ENCODE measurements at regions of chr14 and their contacts with region 1.

Region 1: GRCh38 chr14:73058224-73058921 is at the start of gene RBM25:
- DNase-seq: peak; percentile 94 to 95
- H3K4me3 ChIP-seq: peak within 1 kb of the TSS; percentile 94 to 98 (median 96)
- H3K27ac ChIP-seq: peak within 1 kb of the TSS; percentile 94
- H3K4me1 ChIP-seq: peaks cover 0 to 6% (median 1%) of the 10 kb centered on the region in 4 experiments; a peak in 3 of 7 replicates
- H3K27me3 ChIP-seq: no peaks in the 10 kb centered on the region
- CTCF ChIP-seq: no peak
- EP300 ChIP-seq: no peak
- POLR2A ChIP-seq: peak; percentile 98 to 100
- RAD21 ChIP-seq: no peak
- total RNA-seq, gene RBM25: 125 and 134 TPM in 2 replicates

Region 2: GRCh38 chr14:73026845-73027542 is 31.4 kb before region 1 on chr14 and contains the start of gene ZFYVE1:
- CTCF ChIA-PET with region 1: interaction called, 4 read pairs
- POLR2A ChIA-PET with region 1: interaction called, 34 read pairs
- DNase-seq: peak; percentile 89 to 98
- H3K4me3 ChIP-seq: peak within 1 kb of the TSS; percentile 51 to 87 (median 74)
- H3K27ac ChIP-seq: peak within 1 kb of the TSS; percentile 20; the same call in 1 of the 2 replicates
- H3K4me1 ChIP-seq: no peaks in the 10 kb centered on the region; a peak in 1 of 7 replicates
- H3K27me3 ChIP-seq: no peaks in the 10 kb centered on the region
- CTCF ChIP-seq: no peak
- EP300 ChIP-seq: no peak
- POLR2A ChIP-seq: peak in 1 of 2 experiments; percentile 65; a peak in 2 of 3 replicates
- RAD21 ChIP-seq: no peak
- total RNA-seq, gene ZFYVE1: 12.5 and 13.9 TPM in 2 replicates

Region 3: GRCh38 chr14:73069585-73069984 is 11.2 kb after region 1 on chr14:
- CTCF ChIA-PET with region 1: interaction called, 5 read pairs
- POLR2A ChIA-PET with region 1: interaction called, 45 read pairs
- DNase-seq: no peak
- H3K4me3 ChIP-seq: no peak overlapping the region
- H3K27ac ChIP-seq: no peak overlapping the region
- H3K4me1 ChIP-seq: peaks cover 0 to 3% (median under 1%) of the 10 kb centered on the region in 4 experiments; a peak in 3 of 7 replicates
- H3K27me3 ChIP-seq: no peaks in the 10 kb centered on the region
- CTCF ChIP-seq: no peak
- EP300 ChIP-seq: no peak
- POLR2A ChIP-seq: no peak
- RAD21 ChIP-seq: no peak

Region 4: DNA sequence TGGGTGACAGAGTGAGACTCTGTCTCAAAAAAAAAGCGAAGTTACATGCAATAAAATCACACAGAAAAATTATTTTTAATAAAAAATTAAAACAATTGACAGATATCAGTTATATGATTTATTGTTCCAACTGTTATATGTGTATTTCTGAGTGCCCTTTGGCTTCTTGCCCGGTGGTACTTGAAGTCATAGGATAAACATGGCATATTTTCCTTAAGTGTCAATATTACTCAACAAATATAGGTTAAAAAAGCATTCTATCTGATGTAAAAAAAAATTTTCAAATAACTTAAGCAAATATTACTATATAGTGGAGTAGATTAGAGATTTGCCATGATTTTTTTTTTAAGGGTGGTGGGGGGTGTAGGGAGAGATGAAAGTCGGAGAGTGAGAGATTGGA is 33.5 kb after region 1 on chr14:
- CTCF ChIA-PET with region 1: no interaction called
- POLR2A ChIA-PET with region 1: interaction called, 13 read pairs
- DNase-seq: no peak
- H3K4me3 ChIP-seq: no peak overlapping the region
- H3K27ac ChIP-seq: no peak overlapping the region
- H3K4me1 ChIP-seq: no peaks in the 10 kb centered on the region
- H3K27me3 ChIP-seq: no peaks in the 10 kb centered on the region
- CTCF ChIP-seq: no peak
- EP300 ChIP-seq: no peak
- POLR2A ChIP-seq: no peak
- RAD21 ChIP-seq: no peak

Region 5: DNA sequence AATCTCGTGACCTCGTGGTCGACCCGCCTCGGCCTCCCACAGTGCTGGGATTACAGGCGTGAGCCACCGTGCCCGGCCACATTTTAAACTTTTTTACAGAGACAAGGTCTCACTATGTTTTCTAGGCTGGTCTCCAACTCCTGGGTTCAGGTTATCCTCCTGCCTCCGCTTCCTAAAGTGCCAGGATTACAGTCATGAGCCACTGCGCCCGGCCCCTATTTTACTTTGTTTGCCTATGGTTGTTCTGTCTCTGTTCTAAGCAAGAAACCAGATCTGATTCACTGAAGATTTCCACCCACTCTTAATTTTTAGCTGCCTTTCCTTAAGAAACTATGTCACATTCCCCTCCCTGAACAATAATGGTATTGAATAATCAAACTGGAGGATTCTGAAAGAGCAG is 39.0 kb after region 1 on chr14:
- CTCF ChIA-PET with region 1: no interaction called
- POLR2A ChIA-PET with region 1: interaction called, 13 read pairs
- DNase-seq: no peak
- H3K4me3 ChIP-seq: no peak overlapping the region
- H3K27ac ChIP-seq: no peak overlapping the region
- H3K4me1 ChIP-seq: no peaks in the 10 kb centered on the region
- H3K27me3 ChIP-seq: no peaks in the 10 kb centered on the region
- CTCF ChIP-seq: no peak
- EP300 ChIP-seq: no peak
- POLR2A ChIP-seq: no peak
- RAD21 ChIP-seq: no peak

Region 6: DNA sequence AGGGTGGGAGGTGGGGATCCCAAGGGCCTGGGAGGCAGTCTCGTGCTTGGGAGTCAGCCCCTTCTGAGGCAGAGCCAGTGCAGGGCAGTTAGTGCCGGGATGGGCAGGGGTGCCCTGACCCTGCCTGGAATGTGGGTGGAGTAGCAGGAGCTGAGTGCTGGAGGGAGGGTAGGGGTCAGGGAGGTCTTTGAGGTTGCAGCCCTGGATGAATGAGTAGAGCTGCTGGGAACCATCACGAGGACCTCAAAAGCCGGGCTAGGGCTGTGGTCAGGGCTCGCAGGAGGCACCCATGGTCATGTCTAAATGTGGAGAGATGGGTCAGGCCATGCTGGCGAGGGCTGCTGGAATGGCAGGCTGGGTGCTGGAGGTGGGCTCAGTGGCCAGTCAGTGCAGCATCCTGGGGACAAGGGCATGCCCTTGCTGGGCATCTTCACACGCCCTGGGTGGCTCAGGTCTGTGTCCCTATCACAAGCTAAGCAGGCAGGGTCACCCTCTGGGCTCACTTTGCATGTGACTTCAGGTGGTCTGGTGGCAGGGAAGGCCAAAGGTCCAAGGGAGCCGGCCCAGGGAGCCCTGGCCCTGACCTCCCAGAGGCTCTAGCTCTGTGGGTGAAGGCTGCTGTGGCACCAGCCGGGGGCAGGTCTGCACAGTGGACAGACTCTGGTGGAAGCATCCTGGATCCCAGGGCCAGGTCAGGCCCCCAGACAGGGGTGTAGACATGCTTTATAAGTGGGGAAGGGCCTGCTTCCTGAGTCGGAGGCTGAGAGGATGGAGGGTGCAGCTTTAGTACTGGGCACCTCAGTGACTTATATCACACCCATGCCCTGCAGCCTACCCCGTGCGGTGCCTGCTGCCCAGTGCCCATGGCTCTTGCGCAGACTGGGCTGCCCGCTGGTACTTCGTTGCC is 203.4 kb after region 1 on chr14:
- CTCF ChIA-PET with region 1: no interaction called
- POLR2A ChIA-PET with region 1: no interaction called
- DNase-seq: no peak
- H3K4me3 ChIP-seq: no peak overlapping the region
- H3K27ac ChIP-seq: no peak overlapping the region
- H3K4me1 ChIP-seq: no peaks in the 10 kb centered on the region; a peak in 2 of 7 replicates
- H3K27me3 ChIP-seq: no peaks in the 10 kb centered on the region
- CTCF ChIP-seq: no peak
- EP300 ChIP-seq: no peak
- POLR2A ChIP-seq: no peak
- RAD21 ChIP-seq: no peak

Measured in H1 (cell line).